ENCODE measurements at regions of chr7 and their contacts with region 1.

Region 1: DNA sequence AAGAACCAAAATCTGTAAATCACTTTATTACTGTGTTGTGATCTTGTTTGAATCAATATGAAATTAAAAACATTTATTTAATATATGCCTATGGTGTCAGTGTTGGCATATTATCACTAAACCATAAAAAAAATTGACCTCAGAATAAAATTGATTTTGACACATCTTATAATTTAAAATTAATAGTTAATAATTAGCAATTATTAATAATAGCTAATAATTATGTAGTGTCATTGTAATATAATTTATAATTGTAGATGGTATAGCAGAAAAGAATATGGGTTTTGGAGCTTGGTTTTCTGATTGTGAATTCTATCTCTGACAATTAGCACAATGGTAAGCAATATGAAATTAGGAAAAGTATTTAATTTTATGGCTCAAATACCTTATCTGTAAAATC is 89.4 kb upstream of the CNTNAP2 start:
- DNase-seq: no peak
- H3K4me3 Mint-ChIP-seq: no peak overlapping the region
- H3K27ac Mint-ChIP-seq: no peak overlapping the region
- H3K4me1 Mint-ChIP-seq: no peaks in the 10 kb centered on the region
- H3K27me3 Mint-ChIP-seq: no peaks in the 10 kb centered on the region

Region 2: GRCh38 chr7:146002431-146003078 is 24.7 kb before region 1 on chr7:
- intact Hi-C with region 1: loop called (anchors 2 kb)
- DNase-seq: no peak
- H3K4me3 Mint-ChIP-seq: no peak overlapping the region
- H3K27ac Mint-ChIP-seq: no peak overlapping the region
- H3K4me1 Mint-ChIP-seq: no peaks in the 10 kb centered on the region
- H3K27me3 Mint-ChIP-seq: no peaks in the 10 kb centered on the region

Measured in activated T-helper 1 cell treated with anti-CD3 and anti-CD28 coated beads, Interleukin-12 subunit alpha, Interleukin-12 subunit beta, Interleukin-2, Interleukin-4 antibody, amounts not matched to agents 30 ng/mL and 10 ng/mL and 1 ng/mL, durations not matched to agents 14 hours and 24 hours and 36 hours (primary cell).